ENCODE measurements at regions of chr1 and their contacts with region 1.

Region 1: GRCh38 chr1:180188091-180188506 is 33.4 kb downstream of the QSOX1 start:
- DNase-seq: peak; percentile 79 to 82
- ATAC-seq: peak; percentile 88 to 98
- H3K4me3 ChIP-seq: no peak overlapping the region
- H3K27ac ChIP-seq: no peak overlapping the region
- H3K4me1 ChIP-seq: no peaks in the 10 kb centered on the region
- CTCF ChIP-seq: peak; percentile 86
- EP300 ChIP-seq: no peak
- POLR2A ChIP-seq: no peak
- RAD21 ChIP-seq: peak; percentile 87 to 93

Region 2: GRCh38 chr1:180168786-180169639 is 19.1 kb before region 1 on chr1:
- CTCF ChIA-PET with region 1: interaction called, 132 read pairs
- POLR2A ChIA-PET with region 1: no interaction called
- DNase-seq: peak; percentile 64 to 82
- ATAC-seq: peak; percentile 83 to 94
- H3K4me3 ChIP-seq: no peak overlapping the region
- H3K27ac ChIP-seq: no peak overlapping the region; a peak in 1 of 6 replicates
- H3K4me1 ChIP-seq: peaks cover 19% of the 10 kb centered on the region
- CTCF ChIP-seq: peak; percentile 46; the same call in 2 of the 3 replicates
- EP300 ChIP-seq: no peak
- POLR2A ChIP-seq: no peak
- RAD21 ChIP-seq: peak; percentile 43 to 69; a peak in 4 of 5 replicates

Region 3: GRCh38 chr1:180208264-180208663 is 20.2 kb after region 1 on chr1:
- CTCF ChIA-PET with region 1: interaction called, 77 read pairs
- POLR2A ChIA-PET with region 1: no interaction called
- DNase-seq: no peak
- ATAC-seq: no peak
- H3K4me3 ChIP-seq: no peak overlapping the region
- H3K27ac ChIP-seq: no peak overlapping the region
- H3K4me1 ChIP-seq: no peaks in the 10 kb centered on the region
- CTCF ChIP-seq: no peak
- EP300 ChIP-seq: no peak
- POLR2A ChIP-seq: no peak
- RAD21 ChIP-seq: no peak

Region 4: GRCh38 chr1:180229152-180229973 is 41.3 kb after region 1 on chr1:
- CTCF ChIA-PET with region 1: interaction called, 40 read pairs
- POLR2A ChIA-PET with region 1: no interaction called
- DNase-seq: peak; percentile 65 to 69
- ATAC-seq: peak; percentile 54 to 57
- H3K4me3 ChIP-seq: peak overlapping the region; percentile 70
- H3K27ac ChIP-seq: peak overlapping the region; percentile 69 to 87
- H3K4me1 ChIP-seq: peaks cover 4% of the 10 kb centered on the region; the same call in 2 of the 3 replicates
- CTCF ChIP-seq: no peak
- EP300 ChIP-seq: no peak
- POLR2A ChIP-seq: peak; percentile 39
- RAD21 ChIP-seq: no peak

Region 5: GRCh38 chr1:180309338-180309737 is 121.2 kb after region 1 on chr1:
- CTCF ChIA-PET with region 1: no interaction called
- POLR2A ChIA-PET with region 1: no interaction called
- DNase-seq: peak; percentile 48 to 66
- ATAC-seq: peak; percentile 87 to 92
- H3K4me3 ChIP-seq: no peak overlapping the region
- H3K27ac ChIP-seq: peak overlapping the region; percentile 62 to 81
- H3K4me1 ChIP-seq: peaks cover 51% of the 10 kb centered on the region
- CTCF ChIP-seq: no peak
- EP300 ChIP-seq: no peak
- POLR2A ChIP-seq: no peak
- RAD21 ChIP-seq: no peak

Region 6: DNA sequence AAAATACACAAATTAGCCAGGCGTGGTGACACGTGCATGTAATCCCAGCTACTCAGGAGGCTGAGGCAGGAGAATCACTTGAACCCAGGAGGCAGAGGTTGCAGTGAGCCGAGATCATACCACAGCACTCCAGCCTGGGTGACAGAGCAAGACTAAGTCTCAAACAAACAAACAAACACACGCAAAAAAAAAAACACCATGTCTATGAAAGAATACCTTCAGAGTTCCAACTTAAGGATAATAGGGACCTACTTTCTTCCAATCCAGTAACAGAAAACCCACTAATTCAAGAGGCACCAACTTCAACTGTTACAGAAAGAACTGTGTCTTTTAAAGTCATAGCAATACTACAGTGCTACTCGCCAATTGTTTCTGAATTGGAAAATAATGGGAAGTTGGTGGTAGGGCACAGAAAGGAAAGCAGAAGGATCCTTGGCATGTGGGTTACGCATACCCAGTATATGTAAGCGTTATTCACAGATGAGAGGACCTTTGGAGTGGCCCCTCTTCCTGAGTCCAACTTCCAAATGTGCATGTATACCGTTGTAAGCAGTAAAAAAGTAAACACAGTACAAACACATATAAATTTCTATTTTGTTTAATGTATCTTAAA is 227.2 kb after region 1 on chr1:
- CTCF ChIA-PET with region 1: interaction called, 10 read pairs
- POLR2A ChIA-PET with region 1: no interaction called
- DNase-seq: no peak
- ATAC-seq: no peak
- H3K4me3 ChIP-seq: no peak overlapping the region
- H3K27ac ChIP-seq: no peak overlapping the region
- H3K4me1 ChIP-seq: no peaks in the 10 kb centered on the region
- CTCF ChIP-seq: no peak
- EP300 ChIP-seq: no peak
- POLR2A ChIP-seq: no peak
- RAD21 ChIP-seq: no peak

Measured in A549 (cell line).